ENCODE measurements at regions of chr1 and their contacts with region 1.

Region 1: DNA sequence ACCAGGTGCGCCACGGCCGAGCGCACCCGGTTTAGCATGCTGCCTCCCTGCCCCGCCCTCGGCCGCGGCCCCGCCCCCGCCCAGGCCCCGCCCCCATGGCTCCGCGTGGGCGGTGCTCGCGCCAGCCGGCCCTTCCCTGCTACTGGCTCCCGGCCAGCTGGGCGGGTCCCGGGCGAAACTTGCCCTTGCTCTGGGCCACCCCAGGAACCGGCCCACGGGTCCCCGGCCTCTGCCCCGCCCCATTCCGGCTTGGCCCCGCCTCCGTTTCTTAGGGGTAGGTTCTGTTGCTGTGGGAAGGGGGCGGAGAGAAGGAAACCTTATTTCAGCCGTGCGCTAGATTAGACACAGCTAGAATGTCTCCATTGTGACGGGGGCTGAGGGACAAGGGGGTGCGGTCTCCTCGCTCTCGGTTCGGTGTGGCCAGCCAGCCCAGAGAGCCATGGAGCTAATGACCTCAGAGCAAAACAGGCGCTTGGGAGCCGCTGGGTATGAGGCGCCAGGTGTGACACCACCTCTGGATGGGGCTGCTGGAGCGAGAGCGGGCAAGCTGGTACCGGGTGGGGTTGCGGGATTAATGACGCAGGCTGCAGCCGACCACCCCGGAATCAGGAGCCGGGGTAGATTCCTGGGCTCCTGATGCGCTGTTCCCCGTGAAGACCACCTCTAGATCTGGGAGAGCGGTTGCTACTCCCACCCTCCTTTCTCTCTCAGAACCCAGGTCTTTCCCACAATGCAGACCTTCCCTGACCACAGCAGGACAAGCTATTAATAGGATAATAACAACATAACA is at the start of gene PPM1J:
- DNase-seq: peak; percentile 97
- ATAC-seq: peak; percentile 86
- H3K4me3 ChIP-seq: peak within 1 kb of the TSS; percentile 62 to 82 (median 72)
- H3K4me3 Mint-ChIP-seq: peak within 1 kb of the TSS; percentile 93
- H3K27ac ChIP-seq: peak within 1 kb of the TSS; percentile 25 to 59
- H3K27ac Mint-ChIP-seq: peak within 1 kb of the TSS; percentile 85
- H3K4me1 ChIP-seq: peaks cover 26 to 47% of the 10 kb centered on the region in 2 donors
- H3K4me1 Mint-ChIP-seq: peaks cover 25% of the 10 kb centered on the region
- H3K27me3 ChIP-seq: peaks cover 0 to 16% (median 7%) of the 10 kb centered on the region in 4 experiments
- H3K27me3 Mint-ChIP-seq: peaks cover 15% of the 10 kb centered on the region
- CTCF ChIP-seq: no peak
- total RNA-seq, gene PPM1J: 1.7 and 2.1 TPM in 2 replicates

Region 2: DNA sequence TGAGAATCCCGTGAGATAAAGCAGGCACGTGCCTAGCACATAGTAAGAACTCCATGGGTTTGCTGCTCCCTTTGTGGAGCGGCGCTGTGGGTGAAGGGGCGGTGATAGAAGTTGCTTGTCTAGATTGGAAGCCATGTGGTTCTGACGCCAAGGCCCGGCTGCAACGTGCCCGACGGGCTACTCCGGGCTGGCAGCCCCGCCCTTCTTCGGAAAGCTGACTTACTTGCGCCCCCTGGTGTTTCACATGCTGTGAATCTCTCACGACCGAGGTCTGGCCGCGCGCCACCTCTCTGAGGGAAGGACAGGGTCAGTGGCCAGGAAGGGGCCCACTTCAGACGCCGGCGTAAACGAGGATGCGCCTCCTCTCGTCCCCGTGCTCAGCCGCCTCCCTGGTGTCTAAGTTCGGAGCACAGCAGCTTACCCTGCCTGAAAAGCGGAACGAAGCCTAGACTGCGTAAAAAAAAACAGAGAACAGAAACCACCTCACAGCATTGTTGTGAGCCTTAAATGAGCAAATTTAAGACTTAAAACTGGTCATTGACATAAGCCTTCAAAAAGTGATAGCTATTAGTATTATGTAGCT is 249.3 kb before region 1 on chr1:
- CTCF ChIA-PET with region 1: interaction called, 5 read pairs
- POLR2A ChIA-PET with region 1: interaction called, 4 read pairs
- intact Hi-C with region 1: loop called (anchors 1 kb)
- DNase-seq: peak; percentile 94
- ATAC-seq: peak; percentile 97
- H3K4me3 ChIP-seq: peak overlapping the region; percentile 5 to 51 (median 50)
- H3K4me3 Mint-ChIP-seq: peak overlapping the region; percentile 83
- H3K27ac ChIP-seq: peak overlapping the region; percentile 74 to 75
- H3K27ac Mint-ChIP-seq: peak overlapping the region; percentile 83
- H3K4me1 ChIP-seq: peaks cover 27 to 40% of the 10 kb centered on the region in 2 donors
- H3K4me1 Mint-ChIP-seq: peaks cover 46% of the 10 kb centered on the region
- H3K27me3 ChIP-seq: peaks cover 0 to 21% (median 12%) of the 10 kb centered on the region in 4 experiments
- H3K27me3 Mint-ChIP-seq: peaks cover 19% of the 10 kb centered on the region
- CTCF ChIP-seq: peak; percentile 75

Region 3: GRCh38 chr1:112651205-112651604 is 64.3 kb before region 1 on chr1:
- CTCF ChIA-PET with region 1: no interaction called
- POLR2A ChIA-PET with region 1: no interaction called
- intact Hi-C with region 1: no loop called
- DNase-seq: no peak
- ATAC-seq: no peak
- H3K4me3 ChIP-seq: no peak overlapping the region
- H3K4me3 Mint-ChIP-seq: no peak overlapping the region
- H3K27ac ChIP-seq: no peak overlapping the region
- H3K27ac Mint-ChIP-seq: no peak overlapping the region
- H3K4me1 ChIP-seq: peaks cover 2 to 6% of the 10 kb centered on the region in 2 donors
- H3K4me1 Mint-ChIP-seq: peaks cover 14% of the 10 kb centered on the region
- H3K27me3 ChIP-seq: no peaks in the 10 kb centered on the region
- H3K27me3 Mint-ChIP-seq: no peaks in the 10 kb centered on the region
- CTCF ChIP-seq: no peak

Region 4: DNA sequence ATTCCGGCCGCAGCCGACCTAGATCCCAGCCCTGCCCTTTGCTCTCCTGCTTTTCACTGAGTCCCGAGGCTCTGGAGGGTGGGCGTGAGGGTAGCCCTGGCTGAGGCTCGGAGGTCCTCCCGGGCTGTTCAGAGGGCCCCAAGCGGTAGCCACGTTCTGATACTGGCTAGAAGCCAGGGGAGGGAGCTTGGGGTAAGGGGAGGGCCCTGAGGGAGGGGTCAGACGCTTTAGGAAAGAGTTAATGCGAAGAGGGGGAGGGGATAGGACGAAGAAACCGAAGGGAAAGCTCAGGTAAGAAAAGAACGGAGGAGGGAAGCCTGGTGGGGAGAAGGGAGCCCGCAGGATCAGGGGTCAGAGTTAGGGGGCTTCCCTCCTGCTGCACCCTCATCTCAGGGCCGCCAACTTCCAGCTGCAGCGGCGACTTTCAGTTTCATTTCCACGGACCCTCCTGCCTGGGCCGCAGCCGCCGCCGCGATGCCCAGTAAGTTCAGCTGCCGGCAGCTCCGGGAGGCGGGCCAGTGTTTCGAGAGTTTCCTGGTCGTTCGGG is 40.9 kb before region 1 on chr1 and contains the start of gene MOV10:
- CTCF ChIA-PET with region 1: interaction called, 62 read pairs
- POLR2A ChIA-PET with region 1: interaction called, 4 read pairs
- intact Hi-C with region 1: loop called (anchors 2 kb)
- DNase-seq: peak; percentile 76
- ATAC-seq: peak; percentile 63
- H3K4me3 ChIP-seq: peak within 1 kb of the TSS; percentile 42 to 86 (median 80)
- H3K4me3 Mint-ChIP-seq: peak within 1 kb of the TSS; percentile 94
- H3K27ac ChIP-seq: peak within 1 kb of the TSS; percentile 26 to 76
- H3K27ac Mint-ChIP-seq: peak within 1 kb of the TSS; percentile 92
- H3K4me1 ChIP-seq: peaks cover 25 to 30% of the 10 kb centered on the region in 2 donors
- H3K4me1 Mint-ChIP-seq: peaks cover 30% of the 10 kb centered on the region
- H3K27me3 ChIP-seq: no peaks in the 10 kb centered on the region
- H3K27me3 Mint-ChIP-seq: no peaks in the 10 kb centered on the region
- CTCF ChIP-seq: no peak
- total RNA-seq, gene MOV10: 46.2 and 51.2 TPM in 2 replicates

Region 5: GRCh38 chr1:112688781-112689193 is 26.7 kb before region 1 on chr1:
- CTCF ChIA-PET with region 1: no interaction called
- POLR2A ChIA-PET with region 1: no interaction called
- intact Hi-C with region 1: no loop called
- DNase-seq: no peak
- ATAC-seq: no peak
- H3K4me3 ChIP-seq: no peak overlapping the region
- H3K4me3 Mint-ChIP-seq: no peak overlapping the region
- H3K27ac ChIP-seq: no peak overlapping the region
- H3K27ac Mint-ChIP-seq: no peak overlapping the region
- H3K4me1 ChIP-seq: no peaks in the 10 kb centered on the region
- H3K4me1 Mint-ChIP-seq: peaks cover 6% of the 10 kb centered on the region
- H3K27me3 ChIP-seq: no peaks in the 10 kb centered on the region
- H3K27me3 Mint-ChIP-seq: no peaks in the 10 kb centered on the region
- CTCF ChIP-seq: no peak

Region 6: DNA sequence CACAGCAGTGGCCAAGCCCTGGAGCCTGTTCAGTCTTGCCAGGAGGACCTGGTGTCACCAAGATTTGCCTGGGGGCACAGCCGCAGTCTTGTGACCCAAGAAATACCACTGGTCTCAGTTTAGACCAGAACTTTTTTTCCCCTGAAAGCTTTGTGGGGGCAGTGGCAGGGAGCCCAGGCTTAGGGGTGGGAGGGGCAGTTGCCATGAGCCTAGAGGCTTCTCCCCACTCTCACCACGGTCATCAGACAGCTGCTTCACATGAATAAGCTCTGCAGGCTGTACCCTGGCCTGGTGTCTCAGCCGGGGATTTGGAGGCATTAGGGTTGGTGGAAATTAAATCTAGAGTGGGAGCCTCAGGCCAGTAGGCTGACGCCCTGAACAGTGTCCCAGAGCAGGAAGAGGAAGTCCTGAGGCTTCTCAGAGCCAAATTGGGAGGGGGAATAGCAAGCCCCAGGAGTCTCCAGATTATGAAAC is 166.8 kb after region 1 on chr1:
- CTCF ChIA-PET with region 1: interaction called, 8 read pairs
- POLR2A ChIA-PET with region 1: no interaction called
- intact Hi-C with region 1: loop called (anchors 5 kb)
- DNase-seq: no peak
- ATAC-seq: no peak
- H3K4me3 ChIP-seq: no peak overlapping the region
- H3K4me3 Mint-ChIP-seq: no peak overlapping the region
- H3K27ac ChIP-seq: no peak overlapping the region
- H3K27ac Mint-ChIP-seq: no peak overlapping the region
- H3K4me1 ChIP-seq: no peaks in the 10 kb centered on the region
- H3K4me1 Mint-ChIP-seq: no peaks in the 10 kb centered on the region
- H3K27me3 ChIP-seq: peaks cover 0 to 5% (median 0%) of the 10 kb centered on the region in 4 experiments
- H3K27me3 Mint-ChIP-seq: peaks cover 7% of the 10 kb centered on the region
- CTCF ChIP-seq: no peak

Region 7: GRCh38 chr1:113072757-113073478 is 357.5 kb after region 1 on chr1 and contains the start of gene LRIG2:
- CTCF ChIA-PET with region 1: interaction called, 109 read pairs
- POLR2A ChIA-PET with region 1: interaction called, 3 read pairs
- intact Hi-C with region 1: loop called (anchors 2 kb)
- DNase-seq: peak; percentile 97
- ATAC-seq: peak; percentile 96
- H3K4me3 ChIP-seq: peak within 1 kb of the TSS; percentile 74 to 94 (median 87)
- H3K4me3 Mint-ChIP-seq: peak within 1 kb of the TSS; percentile 99
- H3K27ac ChIP-seq: peak within 1 kb of the TSS; percentile 74 to 77
- H3K27ac Mint-ChIP-seq: peak within 1 kb of the TSS; percentile 97
- H3K4me1 ChIP-seq: peaks cover 15 to 18% of the 10 kb centered on the region in 2 donors
- H3K4me1 Mint-ChIP-seq: peaks cover 33% of the 10 kb centered on the region
- H3K27me3 ChIP-seq: no peaks in the 10 kb centered on the region
- H3K27me3 Mint-ChIP-seq: no peaks in the 10 kb centered on the region
- CTCF ChIP-seq: peak; percentile 95
- total RNA-seq, gene LRIG2: 30.6 and 32.2 TPM in 2 replicates

Region 8: DNA sequence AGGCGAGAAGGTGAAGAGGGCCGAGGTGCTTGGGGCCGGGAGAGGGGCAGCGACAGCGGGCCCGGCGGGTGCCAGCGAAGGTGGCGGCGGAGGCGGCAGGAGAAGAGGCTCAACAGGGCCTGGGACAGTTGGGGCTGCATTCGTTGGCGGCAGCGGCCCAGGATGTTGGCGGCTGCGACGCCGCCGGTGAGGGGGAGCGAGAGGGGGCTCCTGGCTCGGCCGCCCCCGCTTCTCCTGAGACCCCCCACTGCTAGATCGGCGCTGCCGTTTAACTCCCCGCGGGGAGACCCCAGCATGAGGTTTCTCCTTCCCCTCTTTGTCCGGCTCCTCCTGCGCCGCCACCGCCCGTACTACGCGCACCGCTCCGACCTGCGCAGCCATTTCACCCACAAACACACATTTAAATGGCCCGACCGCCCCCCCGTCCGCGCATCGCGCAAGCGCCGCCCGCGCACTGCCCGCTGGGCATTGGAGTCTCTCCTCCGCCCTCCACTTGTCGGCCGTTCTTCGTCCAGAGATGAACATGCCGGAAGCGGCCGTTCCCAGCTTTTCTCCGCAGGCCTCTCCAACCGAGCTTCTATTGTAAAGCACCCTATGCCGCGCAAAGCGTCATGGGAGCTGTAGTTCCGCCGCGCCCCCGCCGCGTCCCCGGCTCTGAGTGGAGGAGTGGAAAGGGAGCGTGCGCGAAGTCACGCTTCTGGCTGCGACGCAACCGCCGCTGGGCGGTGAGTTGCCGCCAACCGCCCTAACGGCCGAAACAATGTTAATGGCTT is 1096.6 kb after region 1 on chr1 and contains the start of gene RSBN1:
- CTCF ChIA-PET with region 1: no interaction called
- POLR2A ChIA-PET with region 1: no interaction called
- intact Hi-C with region 1: loop called (anchors 10 kb)
- DNase-seq: peak; percentile 99
- ATAC-seq: peak; percentile 94
- H3K4me3 ChIP-seq: peak within 1 kb of the TSS; percentile 78 to 91 (median 83)
- H3K4me3 Mint-ChIP-seq: peak within 1 kb of the TSS; percentile 98
- H3K27ac ChIP-seq: peak within 1 kb of the TSS; percentile 86 to 93
- H3K27ac Mint-ChIP-seq: peak within 1 kb of the TSS; percentile 98
- H3K4me1 ChIP-seq: peaks cover 27 to 28% of the 10 kb centered on the region in 2 donors
- H3K4me1 Mint-ChIP-seq: peaks cover 39% of the 10 kb centered on the region
- H3K27me3 ChIP-seq: no peaks in the 10 kb centered on the region
- H3K27me3 Mint-ChIP-seq: no peaks in the 10 kb centered on the region
- CTCF ChIP-seq: peak; percentile 2
- total RNA-seq, gene RSBN1: 40.2 and 41.5 TPM in 2 replicates

Region 9: GRCh38 chr1:114716304-114717170 is 2001.1 kb after region 1 on chr1 and contains the start of gene NRAS:
- CTCF ChIA-PET with region 1: no interaction called
- POLR2A ChIA-PET with region 1: no interaction called
- intact Hi-C with region 1: loop called (anchors 10 kb)
- DNase-seq: peak; percentile 96
- ATAC-seq: peak; percentile 96
- H3K4me3 ChIP-seq: peak within 1 kb of the TSS; percentile 69 to 95 (median 89)
- H3K4me3 Mint-ChIP-seq: peak within 1 kb of the TSS; percentile 99
- H3K27ac ChIP-seq: peak within 1 kb of the TSS; percentile 97
- H3K27ac Mint-ChIP-seq: peak within 1 kb of the TSS; percentile 99
- H3K4me1 ChIP-seq: peaks cover 15 to 16% of the 10 kb centered on the region in 2 donors
- H3K4me1 Mint-ChIP-seq: peaks cover 29% of the 10 kb centered on the region
- H3K27me3 ChIP-seq: no peaks in the 10 kb centered on the region
- H3K27me3 Mint-ChIP-seq: no peaks in the 10 kb centered on the region
- CTCF ChIP-seq: no peak
- total RNA-seq, gene NRAS: 35.0 and 35.3 TPM in 2 replicates

Measured in B cell (primary cell).